Activated CD8-positive, alpha-beta T cell treated with anti-CD3 and anti-CD28 coated beads, Interleukin-2, amount 10 ng/mL, durations not matched to agents 7 days and 5 days (primary cell): ENCODE measurements at regions of chr22 and their contacts with region 1.

Region 1: GRCh38 chr22:36239401-36240171 is at the start of gene APOL2:
- DNase-seq: peak; percentile 92
- ATAC-seq: peak; percentile 98
- H3K4me3 Mint-ChIP-seq: peak within 1 kb of the TSS; percentile 89
- H3K27ac Mint-ChIP-seq: peak within 1 kb of the TSS; percentile 92
- H3K4me1 Mint-ChIP-seq: peaks cover 41% of the 10 kb centered on the region
- H3K27me3 Mint-ChIP-seq: peaks cover 2% of the 10 kb centered on the region
- total RNA-seq, gene APOL2: 62.4 TPM

Region 2: DNA sequence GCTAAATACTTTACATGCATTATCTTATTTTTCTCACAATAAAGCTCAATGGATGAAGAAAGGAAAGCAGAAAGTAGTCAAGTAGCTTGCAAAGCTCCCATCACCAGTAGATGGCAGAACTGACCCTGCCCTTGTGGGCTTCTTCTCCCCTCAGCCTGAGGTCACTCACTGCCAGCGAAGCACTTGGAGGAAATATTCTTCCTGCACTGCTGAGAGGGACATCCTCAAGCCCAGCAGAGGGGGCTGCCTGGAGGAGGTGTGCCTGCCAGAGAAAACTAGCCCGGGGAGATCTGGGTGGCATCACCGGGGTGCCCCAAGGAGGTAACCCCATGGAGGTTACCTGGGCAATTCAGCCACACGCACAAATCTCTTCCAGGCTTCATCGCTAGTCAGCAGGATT is 44.6 kb before region 1 on chr22:
- CTCF ChIA-PET with region 1: interaction called, 21 read pairs
- POLR2A ChIA-PET with region 1: no interaction called
- DNase-seq: peak; percentile 72
- ATAC-seq: peak; percentile 62
- H3K4me3 Mint-ChIP-seq: no peak overlapping the region
- H3K27ac Mint-ChIP-seq: no peak overlapping the region
- H3K4me1 Mint-ChIP-seq: peaks cover 44% of the 10 kb centered on the region
- H3K27me3 Mint-ChIP-seq: no peaks in the 10 kb centered on the region

Region 3: DNA sequence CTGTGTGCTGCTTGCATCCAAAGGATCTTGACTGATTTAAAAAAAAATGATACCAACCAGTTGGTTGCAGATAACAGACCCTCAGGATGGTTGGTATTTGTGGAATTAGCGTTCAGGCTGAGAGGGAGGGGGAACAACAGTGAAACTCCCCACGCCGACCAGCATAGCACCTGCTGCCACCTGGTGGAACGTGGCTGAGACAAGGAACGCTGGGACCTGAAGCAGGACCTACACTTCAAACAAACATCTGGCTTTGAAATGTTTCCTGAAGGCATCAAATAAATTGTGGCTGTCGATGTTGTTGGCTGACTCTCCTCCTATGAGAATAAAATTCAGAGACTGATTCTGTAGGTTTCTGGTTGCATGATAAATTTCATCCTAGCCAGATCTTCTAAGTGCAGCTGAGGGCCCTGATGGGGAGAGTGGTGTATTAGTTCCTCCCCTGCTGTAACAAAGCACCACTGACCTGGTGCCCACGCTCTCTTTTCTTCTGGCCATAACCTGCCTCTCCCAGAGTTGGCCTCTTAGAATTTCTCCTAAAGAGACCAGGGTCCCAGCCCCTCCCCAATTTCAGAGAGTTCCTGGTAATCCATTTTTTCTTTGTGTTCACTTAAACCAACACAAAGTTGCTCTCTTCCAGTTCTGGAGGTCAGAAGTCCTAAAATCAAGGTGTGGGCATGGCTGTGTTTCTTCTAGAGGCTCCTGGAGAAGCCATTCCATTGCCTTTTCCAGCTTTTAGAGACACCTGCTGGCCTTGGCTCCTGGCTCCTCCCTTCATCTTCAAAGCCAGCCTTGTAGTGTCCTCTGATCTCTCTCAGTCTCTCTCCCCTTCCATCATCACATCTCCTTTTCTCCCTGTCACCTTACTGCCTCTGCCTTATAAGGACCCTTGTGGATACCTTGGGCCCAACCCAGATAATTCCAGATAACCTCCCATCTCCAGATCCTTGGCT is 17.5 kb before region 1 on chr22:
- CTCF ChIA-PET with region 1: interaction called, 12 read pairs
- POLR2A ChIA-PET with region 1: no interaction called
- DNase-seq: peak; percentile 73
- ATAC-seq: peak; percentile 94
- H3K4me3 Mint-ChIP-seq: no peak overlapping the region
- H3K27ac Mint-ChIP-seq: no peak overlapping the region
- H3K4me1 Mint-ChIP-seq: peaks cover 12% of the 10 kb centered on the region
- H3K27me3 Mint-ChIP-seq: peaks cover 29% of the 10 kb centered on the region

Region 4: DNA sequence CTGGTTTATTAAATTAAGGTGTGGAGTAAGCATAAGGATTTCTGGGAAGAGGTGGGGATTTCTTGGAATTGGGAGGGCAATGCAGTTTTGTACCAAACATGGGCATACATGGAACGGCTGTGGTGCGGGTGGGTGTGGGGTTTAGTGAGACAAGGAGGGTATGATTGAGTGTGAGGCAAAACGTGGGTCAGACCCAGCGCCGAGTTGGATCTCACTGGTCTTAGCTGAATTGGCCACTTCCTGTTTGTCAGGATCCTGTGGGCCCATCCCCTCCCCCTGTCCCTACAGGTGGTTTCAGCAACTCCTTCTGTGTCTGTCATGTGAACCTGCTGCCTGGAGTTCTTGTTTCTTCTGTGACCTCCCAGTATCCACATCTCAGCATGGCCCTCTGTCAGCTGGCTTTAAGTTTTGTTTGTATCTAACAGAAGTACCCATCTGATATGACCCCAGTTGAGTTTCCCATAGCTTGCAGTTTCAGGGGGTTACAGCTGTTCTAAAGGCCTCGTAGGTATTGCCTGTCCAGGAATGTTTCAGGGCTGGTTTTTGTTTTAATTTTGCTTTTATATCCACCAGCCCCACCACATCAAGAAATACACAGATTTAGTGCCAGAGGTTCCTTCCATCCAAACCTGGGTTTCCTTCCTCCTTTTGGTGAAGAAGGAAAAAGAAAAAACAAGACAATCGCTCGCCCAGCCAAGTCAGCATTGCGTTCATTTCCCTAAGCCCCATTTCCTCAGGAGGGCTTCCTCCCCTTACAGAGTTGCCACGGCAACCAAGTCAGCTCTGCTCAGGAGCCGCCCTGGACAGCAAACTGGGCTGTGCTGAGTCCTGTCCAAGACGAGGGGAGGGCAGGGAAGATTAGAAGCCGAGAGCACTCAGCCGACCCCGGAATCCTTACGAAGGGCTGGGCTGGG is 19.4 kb after region 1 on chr22:
- CTCF ChIA-PET with region 1: interaction called, 90 read pairs
- POLR2A ChIA-PET with region 1: interaction called, 4 read pairs
- DNase-seq: peak; percentile 66
- ATAC-seq: peak; percentile 41
- H3K4me3 Mint-ChIP-seq: peak overlapping the region; percentile 37
- H3K27ac Mint-ChIP-seq: peak overlapping the region; percentile 85
- H3K4me1 Mint-ChIP-seq: peaks cover 59% of the 10 kb centered on the region
- H3K27me3 Mint-ChIP-seq: no peaks in the 10 kb centered on the region

Region 5: GRCh38 chr22:36286471-36287224 is 47.1 kb after region 1 on chr22:
- CTCF ChIA-PET with region 1: interaction called, 18 read pairs
- POLR2A ChIA-PET with region 1: no interaction called
- DNase-seq: peak; percentile 73
- ATAC-seq: peak; percentile 69
- H3K4me3 Mint-ChIP-seq: no peak overlapping the region
- H3K27ac Mint-ChIP-seq: peak overlapping the region; percentile 45
- H3K4me1 Mint-ChIP-seq: peaks cover 45% of the 10 kb centered on the region
- H3K27me3 Mint-ChIP-seq: no peaks in the 10 kb centered on the region

Region 6: DNA sequence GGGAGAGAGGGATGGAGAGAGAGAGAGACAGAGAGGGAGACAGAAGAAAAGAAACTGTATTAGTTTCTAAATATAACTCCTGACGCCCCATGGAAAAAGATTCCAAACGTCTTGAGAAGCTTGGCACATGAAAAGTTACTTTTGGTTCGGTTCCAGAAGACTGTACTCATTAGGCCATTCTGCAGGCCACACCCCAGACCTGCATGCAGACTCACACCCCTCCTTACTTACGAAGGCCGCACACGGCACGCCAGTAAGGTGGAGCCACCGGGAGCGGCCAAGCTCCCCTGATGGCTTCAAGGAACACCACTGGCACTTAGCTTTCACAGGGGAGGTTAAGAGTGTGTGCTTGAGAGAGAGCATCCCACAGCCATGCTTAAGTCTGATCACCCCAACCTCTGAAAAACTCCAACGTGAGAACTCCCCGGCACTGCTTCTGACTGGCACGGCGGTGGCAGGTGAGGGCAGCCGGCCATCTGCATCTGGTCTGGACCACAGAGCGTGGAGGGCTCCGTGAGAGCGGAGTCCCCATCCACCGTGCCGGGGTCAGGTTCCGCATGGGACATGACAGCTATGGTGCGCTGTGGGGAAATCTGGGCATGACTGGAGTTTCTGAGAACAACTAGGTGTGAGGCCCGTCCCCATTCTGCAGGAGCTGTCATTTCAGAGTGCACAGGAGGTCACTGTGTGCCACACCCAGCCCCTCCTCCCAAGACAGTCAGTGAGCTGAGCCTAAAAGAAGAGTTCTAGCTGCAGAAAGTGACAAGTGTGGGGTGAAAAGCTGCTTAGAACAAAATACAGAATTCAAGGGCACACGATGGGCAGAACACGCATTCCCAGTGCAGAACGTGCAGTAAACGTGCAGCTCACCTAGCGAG is 85.8 kb after region 1 on chr22:
- CTCF ChIA-PET with region 1: no interaction called
- POLR2A ChIA-PET with region 1: no interaction called
- DNase-seq: no peak
- ATAC-seq: no peak
- H3K4me3 Mint-ChIP-seq: no peak overlapping the region
- H3K27ac Mint-ChIP-seq: peak overlapping the region; percentile 50
- H3K4me1 Mint-ChIP-seq: peaks cover 49% of the 10 kb centered on the region
- H3K27me3 Mint-ChIP-seq: no peaks in the 10 kb centered on the region